Endothelial cell of umbilical vein (primary cell): ENCODE measurements at regions of chr1 and their contacts with region 1.

Region 1: GRCh38 chr1:217660353-217661062 is 29.4 kb downstream of the SPATA17 start:
- DNase-seq: peak; percentile 42
- H3K4me3 ChIP-seq: no peak overlapping the region
- H3K27ac ChIP-seq: no peak overlapping the region
- H3K4me1 ChIP-seq: no peaks in the 10 kb centered on the region
- H3K27me3 ChIP-seq: no peaks in the 10 kb centered on the region
- CTCF ChIP-seq: peak; percentile 20 to 43
- POLR2A ChIP-seq: no peak

Region 2: GRCh38 chr1:215710036-215710898 is 1950.2 kb before region 1 on chr1:
- CTCF ChIA-PET with region 1: interaction called, 3 read pairs
- POLR2A ChIA-PET with region 1: no interaction called
- dilution Hi-C with region 1: no loop called
- intact Hi-C with region 1: loop called (anchors 10 kb)
- DNase-seq: peak; percentile 3
- H3K4me3 ChIP-seq: no peak overlapping the region
- H3K27ac ChIP-seq: no peak overlapping the region
- H3K4me1 ChIP-seq: no peaks in the 10 kb centered on the region
- H3K27me3 ChIP-seq: no peaks in the 10 kb centered on the region
- CTCF ChIP-seq: peak; percentile 8 to 31
- POLR2A ChIP-seq: no peak

Region 3: GRCh38 chr1:217134857-217135568 is 525.5 kb before region 1 on chr1:
- CTCF ChIA-PET with region 1: no interaction called
- POLR2A ChIA-PET with region 1: no interaction called
- dilution Hi-C with region 1: no loop called
- intact Hi-C with region 1: loop called (anchors 10 kb)
- DNase-seq: no peak
- H3K4me3 ChIP-seq: peak overlapping the region in 1 of 3 experiments; percentile 9
- H3K27ac ChIP-seq: no peak overlapping the region
- H3K4me1 ChIP-seq: no peaks in the 10 kb centered on the region
- H3K27me3 ChIP-seq: peaks cover 47 to 69% of the 10 kb centered on the region in 2 experiments
- CTCF ChIP-seq: no peak
- POLR2A ChIP-seq: no peak

Region 4: GRCh38 chr1:217431393-217431792 is 229.1 kb before region 1 on chr1:
- CTCF ChIA-PET with region 1: interaction called, 8 read pairs
- POLR2A ChIA-PET with region 1: no interaction called
- dilution Hi-C with region 1: no loop called
- intact Hi-C with region 1: loop called (anchors 2 kb)
- DNase-seq: no peak
- H3K4me3 ChIP-seq: no peak overlapping the region
- H3K27ac ChIP-seq: no peak overlapping the region
- H3K4me1 ChIP-seq: no peaks in the 10 kb centered on the region
- H3K27me3 ChIP-seq: no peaks in the 10 kb centered on the region
- CTCF ChIP-seq: no peak
- POLR2A ChIP-seq: no peak

Region 5: GRCh38 chr1:217590598-217590997 is 69.9 kb before region 1 on chr1:
- CTCF ChIA-PET with region 1: no interaction called
- POLR2A ChIA-PET with region 1: no interaction called
- dilution Hi-C with region 1: no loop called
- intact Hi-C with region 1: no loop called
- DNase-seq: no peak
- H3K4me3 ChIP-seq: no peak overlapping the region
- H3K27ac ChIP-seq: no peak overlapping the region
- H3K4me1 ChIP-seq: no peaks in the 10 kb centered on the region
- H3K27me3 ChIP-seq: no peaks in the 10 kb centered on the region
- CTCF ChIP-seq: no peak
- POLR2A ChIP-seq: no peak

Region 6: GRCh38 chr1:217605068-217605789 is 55.3 kb before region 1 on chr1:
- CTCF ChIA-PET with region 1: no interaction called
- POLR2A ChIA-PET with region 1: no interaction called
- dilution Hi-C with region 1: no loop called
- intact Hi-C with region 1: no loop called
- DNase-seq: peak; percentile 52
- H3K4me3 ChIP-seq: no peak overlapping the region
- H3K27ac ChIP-seq: no peak overlapping the region
- H3K4me1 ChIP-seq: peaks cover 7% of the 10 kb centered on the region
- H3K27me3 ChIP-seq: no peaks in the 10 kb centered on the region
- CTCF ChIP-seq: no peak
- POLR2A ChIP-seq: no peak

Region 7: GRCh38 chr1:217673387-217673786 is 12.9 kb after region 1 on chr1:
- CTCF ChIA-PET with region 1: interaction called, 11 read pairs
- POLR2A ChIA-PET with region 1: no interaction called
- dilution Hi-C with region 1: no loop called
- intact Hi-C with region 1: no loop called
- DNase-seq: no peak
- H3K4me3 ChIP-seq: no peak overlapping the region
- H3K27ac ChIP-seq: no peak overlapping the region
- H3K4me1 ChIP-seq: no peaks in the 10 kb centered on the region
- H3K27me3 ChIP-seq: no peaks in the 10 kb centered on the region
- CTCF ChIP-seq: no peak
- POLR2A ChIP-seq: no peak